PC-9 (cell line): ENCODE measurements at regions of chr16 and their contacts with region 1.

Region 1: GRCh38 chr16:68843482-68844210 is at the start of gene TANGO6:
- DNase-seq: peak; percentile 55 to 70
- H3K4me3 ChIP-seq: peak within 1 kb of the TSS; percentile 80
- H3K27ac ChIP-seq: 0 out of 2 replicates have a peak within 1 kb of the TSS, but pooled peaks have one; percentile 5
- H3K4me1 ChIP-seq: no peaks in the 10 kb centered on the region; the same call in 1 of the 2 replicates
- H3K27me3 ChIP-seq: no peaks in the 10 kb centered on the region
- CTCF ChIP-seq: no peak; the same call in 1 of the 2 replicates
- total RNA-seq, gene TANGO6: 4.7 and 5.8 TPM in 2 replicates

Region 2: DNA sequence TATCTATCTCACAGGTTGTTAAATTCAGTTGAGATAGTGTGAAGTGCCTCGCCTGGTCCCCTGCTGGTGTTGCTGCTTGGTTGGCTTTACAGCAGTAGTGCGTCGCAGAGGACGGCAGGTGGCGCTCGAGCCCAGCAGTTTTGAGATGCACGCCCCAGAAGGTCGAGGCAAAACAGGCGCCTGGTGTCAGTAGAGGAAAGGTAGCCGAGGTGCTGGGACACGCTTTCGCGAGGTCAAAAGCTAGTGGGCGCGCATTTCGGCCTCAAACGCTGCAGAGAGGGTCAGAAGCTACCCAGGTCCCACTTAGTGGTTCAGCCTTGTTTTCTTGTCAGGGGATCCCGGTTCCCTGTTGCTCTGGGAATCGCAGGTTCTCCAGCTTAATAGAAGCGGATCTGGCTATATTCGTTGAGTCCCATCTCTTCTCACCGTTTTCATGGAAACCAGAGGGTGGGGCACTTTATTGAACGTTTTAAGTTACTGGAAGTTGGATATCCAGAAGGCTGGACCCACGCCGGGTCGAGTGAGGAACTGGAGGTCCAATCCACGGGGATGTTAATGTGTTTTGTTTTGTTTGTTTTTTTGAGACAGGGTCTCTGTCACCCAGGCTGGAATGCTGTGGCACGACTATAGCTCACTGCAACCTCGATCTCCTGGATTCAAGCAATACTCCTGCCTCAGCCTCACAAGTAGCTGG is 314.8 kb before region 1 on chr16:
- CTCF ChIA-PET with region 1: no interaction called
- POLR2A ChIA-PET with region 1: no interaction called
- intact Hi-C with region 1: loop called (anchors 2 kb)
- DNase-seq: peak; percentile 62 to 81
- H3K4me3 ChIP-seq: no peak overlapping the region
- H3K27ac ChIP-seq: no peak overlapping the region
- H3K4me1 ChIP-seq: peaks cover 10% of the 10 kb centered on the region
- H3K27me3 ChIP-seq: no peaks in the 10 kb centered on the region
- CTCF ChIP-seq: peak; percentile 88

Region 3: DNA sequence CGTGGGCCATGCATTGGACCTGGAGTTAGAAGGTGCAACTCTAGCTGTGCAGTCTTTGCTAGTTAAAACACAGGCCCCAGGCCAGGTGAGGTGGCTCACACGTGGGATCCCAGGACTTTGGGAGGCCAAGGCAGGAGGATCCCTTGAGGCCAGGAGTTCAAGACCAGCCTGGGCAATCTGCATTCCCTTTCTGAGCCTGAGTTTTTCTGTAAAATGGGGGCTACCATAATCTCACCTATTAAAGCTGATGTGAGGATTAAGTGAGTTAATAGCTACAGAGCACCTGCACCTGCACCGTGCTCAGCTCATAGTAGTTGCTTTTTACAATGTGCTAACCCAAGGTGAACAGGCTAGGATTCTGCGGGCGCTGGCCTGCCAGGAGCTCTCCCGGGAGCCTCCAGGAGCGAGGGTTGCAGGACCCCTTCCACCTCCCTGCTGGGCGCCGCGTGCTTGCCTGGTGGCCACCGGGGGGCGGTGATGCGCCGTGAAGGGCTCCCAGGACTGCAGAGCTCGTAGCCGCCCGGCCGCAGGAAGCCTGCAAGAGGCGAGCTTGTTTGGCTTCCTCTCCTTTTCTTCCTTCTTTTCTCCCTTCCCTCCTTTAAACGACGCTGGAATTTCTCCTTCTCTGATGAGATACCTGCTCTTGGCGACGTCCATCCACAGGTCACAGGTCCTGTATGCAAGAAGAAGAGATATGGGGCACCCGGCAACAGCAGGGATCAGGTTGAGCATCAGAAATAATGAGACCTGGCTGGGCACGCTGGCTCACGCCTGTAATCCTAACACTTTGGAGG is 253.2 kb before region 1 on chr16:
- CTCF ChIA-PET with region 1: interaction called, 10 read pairs
- POLR2A ChIA-PET with region 1: no interaction called
- intact Hi-C with region 1: loop called (anchors 2 kb)
- DNase-seq: peak; percentile 46 to 79
- H3K4me3 ChIP-seq: no peak overlapping the region
- H3K27ac ChIP-seq: no peak overlapping the region
- H3K4me1 ChIP-seq: no peaks in the 10 kb centered on the region
- H3K27me3 ChIP-seq: no peaks in the 10 kb centered on the region
- CTCF ChIP-seq: peak; percentile 92

Region 4: DNA sequence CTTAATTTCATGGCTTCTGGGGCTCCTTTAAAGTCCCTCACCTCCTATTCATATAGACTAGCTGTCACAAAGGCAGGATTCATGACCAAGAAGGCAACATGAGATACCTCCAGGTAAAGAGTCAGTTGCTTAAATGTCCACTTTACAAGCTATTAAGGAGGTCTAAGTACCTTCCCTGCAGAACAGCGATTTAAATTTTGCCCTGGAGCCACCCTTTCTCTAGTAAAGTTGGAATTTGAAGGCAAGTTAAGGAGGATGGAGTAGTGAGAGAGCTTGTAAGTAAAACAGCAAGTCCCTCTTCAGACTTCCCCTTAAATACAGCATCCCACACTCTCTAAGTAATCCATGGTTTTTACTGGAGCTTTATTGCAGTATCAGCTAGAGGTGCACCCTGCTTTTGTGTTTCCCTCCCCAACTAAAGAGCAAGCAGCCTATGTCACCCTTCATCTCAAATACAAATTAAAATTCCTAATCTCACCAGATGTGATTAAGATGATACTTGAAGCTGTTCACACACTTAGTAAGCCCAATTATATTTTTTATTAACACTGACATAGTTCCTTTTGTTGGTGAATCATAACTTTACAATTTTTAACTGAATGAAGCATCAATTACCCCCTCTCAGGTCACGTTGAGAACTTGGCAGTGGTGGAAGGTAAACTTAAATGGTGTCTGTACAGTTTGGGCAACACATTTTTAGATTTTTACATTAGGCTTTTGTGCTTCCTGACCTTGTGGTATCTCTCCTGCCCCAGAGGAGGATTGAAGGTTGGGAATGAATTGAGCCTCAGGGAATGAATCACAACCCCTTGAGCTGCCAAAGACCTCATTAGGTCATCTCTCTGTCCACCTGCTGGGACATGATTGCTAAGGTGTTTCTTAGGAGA is 108.6 kb after region 1 on chr16:
- CTCF ChIA-PET with region 1: no interaction called
- POLR2A ChIA-PET with region 1: no interaction called
- intact Hi-C with region 1: no loop called
- DNase-seq: peak in 1 of 2 experiments; percentile 84
- H3K4me3 ChIP-seq: no peak overlapping the region
- H3K27ac ChIP-seq: peak overlapping the region; percentile 45
- H3K4me1 ChIP-seq: peaks cover 28% of the 10 kb centered on the region
- H3K27me3 ChIP-seq: no peaks in the 10 kb centered on the region
- CTCF ChIP-seq: no peak

Region 5: GRCh38 chr16:69089091-69089910 is 245.7 kb after region 1 on chr16:
- CTCF ChIA-PET with region 1: no interaction called
- POLR2A ChIA-PET with region 1: no interaction called
- intact Hi-C with region 1: no loop called
- DNase-seq: peak; percentile 55 to 62
- H3K4me3 ChIP-seq: peak overlapping the region; percentile 11; the same call in 1 of the 2 replicates
- H3K27ac ChIP-seq: no peak overlapping the region
- H3K4me1 ChIP-seq: peaks cover 23% of the 10 kb centered on the region
- H3K27me3 ChIP-seq: no peaks in the 10 kb centered on the region
- CTCF ChIP-seq: no peak

Region 6: DNA sequence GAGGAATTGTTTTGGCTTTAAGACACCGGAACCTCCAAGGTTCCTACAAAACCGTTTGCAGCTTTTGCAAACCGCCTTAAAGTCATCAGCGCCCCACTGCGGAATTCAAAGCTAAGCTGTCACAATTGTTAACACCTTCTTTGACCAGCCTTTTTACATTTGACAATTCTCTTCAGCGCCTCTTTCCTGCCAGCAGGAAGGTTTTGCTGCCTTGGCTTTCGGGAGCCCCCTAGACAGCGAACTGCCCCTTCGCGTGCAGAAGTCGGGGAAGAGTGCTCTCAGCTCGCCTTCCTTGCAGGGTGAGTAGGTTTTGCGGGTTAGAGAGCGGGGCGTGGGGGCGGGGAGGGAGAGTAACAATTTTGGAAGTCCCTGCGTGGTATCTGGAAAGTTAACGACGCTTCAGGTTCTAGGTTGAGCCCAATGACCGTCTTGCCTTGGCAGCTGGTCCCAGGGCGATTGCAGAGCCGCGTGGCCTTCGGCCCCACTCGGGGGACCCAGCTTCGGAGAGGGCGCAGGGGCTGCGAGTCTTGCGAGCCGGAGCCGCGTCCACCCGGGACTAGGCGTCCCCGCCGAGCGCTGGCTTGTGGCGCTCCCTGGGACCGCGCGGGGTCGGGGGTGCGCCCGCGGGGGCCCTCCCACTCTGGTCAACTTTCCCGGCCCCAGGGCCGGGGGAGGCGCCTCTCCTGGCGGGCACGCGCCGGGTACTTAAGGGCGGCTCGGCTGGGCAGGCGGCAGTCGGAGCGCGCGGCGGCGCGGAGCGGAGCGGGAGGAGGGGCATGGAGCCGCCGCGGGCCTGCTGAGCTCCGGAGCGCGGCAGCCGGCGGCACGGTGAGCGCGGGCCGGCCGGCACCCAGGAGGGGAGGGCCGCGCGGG is 262.1 kb after region 1 on chr16 and contains the start of gene HAS3:
- CTCF ChIA-PET with region 1: interaction called, 12 read pairs
- POLR2A ChIA-PET with region 1: no interaction called
- intact Hi-C with region 1: no loop called
- DNase-seq: peak; percentile 66 to 71
- H3K4me3 ChIP-seq: peak within 1 kb of the TSS; percentile 93
- H3K27ac ChIP-seq: no peak within 1 kb of the TSS
- H3K4me1 ChIP-seq: peaks cover 14% of the 10 kb centered on the region; the same call in 1 of the 2 replicates
- H3K27me3 ChIP-seq: no peaks in the 10 kb centered on the region
- CTCF ChIP-seq: peak; percentile 62; the same call in 1 of the 2 replicates
- total RNA-seq, gene HAS3: 2.5 and 2.7 TPM in 2 replicates

Region 7: DNA sequence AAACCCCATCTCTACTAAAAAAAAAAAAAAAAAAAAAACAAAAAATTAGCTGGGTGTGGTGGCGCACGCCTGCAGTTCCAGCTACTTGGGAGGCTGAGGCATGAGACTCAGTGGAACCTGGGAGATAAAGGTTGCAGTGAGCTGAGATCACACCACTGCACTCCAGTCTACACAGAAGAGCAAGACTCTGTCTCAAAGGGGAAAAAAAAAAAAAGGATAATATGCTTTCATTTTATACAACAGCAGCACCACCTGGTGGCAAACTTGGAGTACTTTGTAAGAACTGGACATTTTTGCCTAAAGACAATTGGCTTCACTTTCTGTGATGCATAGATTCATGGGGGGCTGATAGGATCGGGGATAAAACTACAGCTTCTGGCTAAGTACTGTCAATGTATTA is 280.3 kb after region 1 on chr16:
- CTCF ChIA-PET with region 1: interaction called, 5 read pairs
- POLR2A ChIA-PET with region 1: interaction called, 3 read pairs
- intact Hi-C with region 1: loop called (anchors 1 kb)
- DNase-seq: peak; percentile 47 to 62
- H3K4me3 ChIP-seq: no peak overlapping the region
- H3K27ac ChIP-seq: no peak overlapping the region
- H3K4me1 ChIP-seq: no peaks in the 10 kb centered on the region
- H3K27me3 ChIP-seq: no peaks in the 10 kb centered on the region
- CTCF ChIP-seq: peak; percentile 87

Region 8: GRCh38 chr16:69330286-69331109 is 486.9 kb after region 1 on chr16 and contains the start of gene PDF:
- CTCF ChIA-PET with region 1: interaction called, 11 read pairs
- POLR2A ChIA-PET with region 1: no interaction called
- intact Hi-C with region 1: no loop called
- DNase-seq: peak; percentile 85 to 94
- H3K4me3 ChIP-seq: peak within 1 kb of the TSS; percentile 87
- H3K27ac ChIP-seq: peak within 1 kb of the TSS; percentile 64
- H3K4me1 ChIP-seq: peaks cover 44% of the 10 kb centered on the region
- H3K27me3 ChIP-seq: no peaks in the 10 kb centered on the region
- CTCF ChIP-seq: no peak
- total RNA-seq, gene PDF: 16.7 and 20.3 TPM in 2 replicates

Region 9: DNA sequence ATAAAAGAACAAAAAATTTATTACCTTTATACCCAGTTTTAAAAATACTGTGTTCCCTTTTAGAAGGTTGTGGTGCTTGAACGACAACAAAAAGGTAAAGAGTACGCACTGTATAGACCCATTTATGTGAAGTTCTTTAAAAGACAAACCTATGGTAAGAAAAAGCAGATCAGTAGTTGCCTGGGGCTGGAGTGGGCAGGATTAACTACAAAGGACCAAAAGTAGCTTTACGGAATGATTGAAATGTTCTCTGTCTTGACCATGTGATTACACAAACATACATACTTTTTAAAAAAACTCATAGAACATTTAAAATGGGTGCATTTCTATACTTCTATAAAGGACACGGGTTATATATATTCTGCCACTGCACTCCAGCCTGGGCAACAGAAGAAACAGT is 733.8 kb after region 1 on chr16:
- CTCF ChIA-PET with region 1: no interaction called
- POLR2A ChIA-PET with region 1: no interaction called
- intact Hi-C with region 1: no loop called
- DNase-seq: no peak
- H3K4me3 ChIP-seq: no peak overlapping the region
- H3K27ac ChIP-seq: 0 out of 2 replicates have a peak overlapping the region, but pooled peaks have one; percentile 27
- H3K4me1 ChIP-seq: no peaks in the 10 kb centered on the region
- H3K27me3 ChIP-seq: no peaks in the 10 kb centered on the region
- CTCF ChIP-seq: no peak